ENCODE measurements at regions of chr10 and their contacts with region 1.

Region 1: GRCh38 chr10:4051011-4051640 is 266.1 kb upstream of the KLF6 start:
- DNase-seq: no peak
- ATAC-seq: no peak
- H3K4me3 ChIP-seq: no peak overlapping the region
- H3K27ac ChIP-seq: no peak overlapping the region
- H3K4me1 ChIP-seq: no peaks in the 10 kb centered on the region
- H3K27me3 ChIP-seq: no peaks in the 10 kb centered on the region
- CTCF ChIP-seq: no peak

Region 2: DNA sequence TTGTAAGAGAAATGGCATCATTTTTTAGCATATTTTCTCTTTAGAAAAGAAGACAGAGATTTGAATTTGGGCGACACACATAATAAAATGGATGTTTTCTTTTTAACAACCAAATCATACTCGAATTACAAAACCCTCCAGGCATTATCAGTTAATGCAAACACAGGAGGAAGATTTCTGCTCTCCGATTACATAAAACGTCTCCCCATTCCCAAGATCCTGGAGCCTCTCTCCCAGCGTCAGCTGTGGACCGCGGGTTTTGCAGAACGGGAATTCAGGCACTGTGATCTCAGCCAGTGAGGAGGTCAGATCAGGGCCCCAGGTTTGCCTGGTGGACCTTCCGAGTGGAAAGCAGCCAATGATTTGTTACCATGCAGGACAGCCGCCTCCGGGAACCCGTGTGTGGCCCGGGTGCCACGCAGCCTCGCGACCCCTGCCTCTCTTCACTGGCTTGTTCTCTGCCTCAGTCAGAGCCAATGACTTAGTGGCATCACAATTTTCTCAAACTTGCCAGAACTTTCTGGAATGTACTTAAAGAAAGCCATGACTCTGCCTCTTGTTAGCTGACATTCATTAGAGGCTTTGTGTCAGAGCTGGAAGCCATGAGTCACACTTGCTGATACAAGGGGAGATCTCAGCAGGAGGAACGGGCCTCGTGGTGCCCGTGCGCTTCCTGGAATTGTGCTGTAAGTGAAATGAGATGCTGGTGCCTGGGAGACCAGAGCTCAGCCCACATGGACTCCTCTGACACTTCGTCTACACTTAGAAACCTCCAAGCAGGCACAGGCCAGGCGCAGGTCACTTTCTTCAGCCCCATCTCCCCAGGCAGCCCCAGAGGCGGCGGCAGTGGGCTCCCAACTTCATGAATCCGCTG is 512.2 kb before region 1 on chr10:
- CTCF ChIA-PET with region 1: no interaction called
- POLR2A ChIA-PET with region 1: no interaction called
- intact Hi-C with region 1: loop called (anchors 10 kb)
- DNase-seq: peak; percentile 64
- ATAC-seq: peak; percentile 68
- H3K4me3 ChIP-seq: peak overlapping the region; percentile 39; the same call in 1 of the 2 replicates
- H3K27ac ChIP-seq: peak overlapping the region; percentile 89
- H3K4me1 ChIP-seq: peaks cover 45% of the 10 kb centered on the region
- H3K27me3 ChIP-seq: no peaks in the 10 kb centered on the region
- CTCF ChIP-seq: no peak

Region 3: DNA sequence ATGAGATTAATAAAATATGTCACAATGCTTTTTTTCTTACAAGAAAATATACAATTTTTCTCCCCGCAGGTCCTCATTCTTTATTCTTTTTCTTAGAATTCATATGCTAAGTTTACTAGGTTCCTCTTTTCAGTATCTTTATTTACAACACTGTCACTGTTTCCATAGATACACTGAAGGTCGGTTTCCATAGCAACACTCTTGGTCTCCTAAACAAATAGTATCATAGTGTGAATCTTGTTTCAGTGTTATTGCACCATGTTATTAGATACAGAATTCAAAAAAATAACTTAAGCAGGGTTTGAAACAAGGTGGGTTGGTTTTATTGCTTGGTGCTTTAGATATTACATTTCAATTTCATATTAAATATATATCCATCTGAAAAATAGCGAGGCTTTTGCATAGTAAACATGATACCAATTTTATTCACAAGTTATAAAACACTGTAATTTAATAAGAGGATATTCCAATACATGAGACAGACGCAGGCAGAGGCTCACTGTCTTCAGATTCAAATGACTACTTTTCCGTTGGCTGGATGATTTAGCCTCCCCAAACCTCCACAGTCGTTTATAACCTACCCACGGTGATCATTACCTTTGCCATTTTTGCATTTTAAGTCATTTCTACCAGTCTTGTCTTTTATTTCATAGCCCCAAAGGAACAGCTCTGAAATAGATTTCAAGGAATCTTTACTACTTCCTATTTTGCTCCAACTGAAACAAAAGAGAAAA is 177.2 kb before region 1 on chr10:
- CTCF ChIA-PET with region 1: no interaction called
- POLR2A ChIA-PET with region 1: no interaction called
- intact Hi-C with region 1: no loop called
- DNase-seq: no peak
- ATAC-seq: no peak
- H3K4me3 ChIP-seq: no peak overlapping the region
- H3K27ac ChIP-seq: no peak overlapping the region
- H3K4me1 ChIP-seq: peaks cover 4% of the 10 kb centered on the region; the same call in 1 of the 2 replicates
- H3K27me3 ChIP-seq: no peaks in the 10 kb centered on the region
- CTCF ChIP-seq: no peak

Measured in PC-3 (cell line).